Activated CD4-positive, alpha-beta T cell treated with anti-CD3 and anti-CD28 coated beads for 36 hours (primary cell): ENCODE measurements at regions of chr1 and their contacts with region 1.

Region 1: GRCh38 chr1:24111996-24112779 is at the start of gene MYOM3:
- DNase-seq: peak; percentile 82
- ATAC-seq: peak; percentile 97
- H3K4me3 Mint-ChIP-seq: no peak within 1 kb of the TSS
- H3K27ac Mint-ChIP-seq: no peak within 1 kb of the TSS
- H3K4me1 Mint-ChIP-seq: peaks cover 9% of the 10 kb centered on the region
- H3K27me3 Mint-ChIP-seq: peaks cover 13% of the 10 kb centered on the region
- total RNA-seq, gene MYOM3: not detected

Region 2: GRCh38 chr1:24047101-24047459 is 65.1 kb before region 1 on chr1:
- CTCF ChIA-PET with region 1: no interaction called
- POLR2A ChIA-PET with region 1: interaction called, 11 read pairs
- intact Hi-C with region 1: no loop called
- DNase-seq: no peak
- ATAC-seq: no peak
- H3K4me3 Mint-ChIP-seq: no peak overlapping the region
- H3K27ac Mint-ChIP-seq: no peak overlapping the region
- H3K4me1 Mint-ChIP-seq: peaks cover 6% of the 10 kb centered on the region
- H3K27me3 Mint-ChIP-seq: peaks cover 2% of the 10 kb centered on the region

Region 3: DNA sequence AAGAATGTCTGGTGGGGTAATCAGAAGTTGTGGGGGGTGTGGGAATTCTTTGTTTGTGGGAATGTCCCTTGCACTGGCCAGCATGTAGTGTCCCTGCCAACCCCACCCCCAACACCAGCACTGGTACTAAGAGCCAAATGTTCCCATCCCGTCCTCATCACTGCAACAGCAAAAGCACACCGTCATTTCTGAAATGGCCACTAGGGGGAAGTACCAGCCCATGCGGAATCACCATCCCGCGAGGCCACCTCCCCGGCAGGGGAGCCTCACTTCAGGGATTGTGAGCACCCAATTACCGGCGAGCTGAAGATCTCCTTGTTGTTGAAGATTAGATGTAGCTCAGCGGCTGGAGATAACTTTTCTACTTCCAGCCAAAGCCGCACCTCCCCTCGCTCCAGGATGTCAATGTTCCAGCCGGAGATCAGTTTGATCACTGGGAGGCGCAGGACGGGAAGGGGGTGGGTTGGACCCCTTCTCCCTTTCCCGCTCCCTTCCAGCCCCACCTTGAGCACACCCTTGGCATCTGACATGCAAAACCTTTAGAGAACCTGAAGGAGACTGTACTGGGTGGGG is 41.3 kb before region 1 on chr1:
- CTCF ChIA-PET with region 1: interaction called, 9 read pairs
- POLR2A ChIA-PET with region 1: interaction called, 4 read pairs
- intact Hi-C with region 1: loop called (anchors 1 kb)
- DNase-seq: peak; percentile 87
- ATAC-seq: peak; percentile 97
- H3K4me3 Mint-ChIP-seq: no peak overlapping the region
- H3K27ac Mint-ChIP-seq: no peak overlapping the region
- H3K4me1 Mint-ChIP-seq: peaks cover 4% of the 10 kb centered on the region
- H3K27me3 Mint-ChIP-seq: peaks cover 6% of the 10 kb centered on the region

Region 4: GRCh38 chr1:24181619-24182018 is 69.4 kb after region 1 on chr1:
- CTCF ChIA-PET with region 1: no interaction called
- POLR2A ChIA-PET with region 1: no interaction called
- intact Hi-C with region 1: no loop called
- DNase-seq: no peak
- ATAC-seq: no peak
- H3K4me3 Mint-ChIP-seq: no peak overlapping the region
- H3K27ac Mint-ChIP-seq: no peak overlapping the region
- H3K4me1 Mint-ChIP-seq: peaks cover 6% of the 10 kb centered on the region
- H3K27me3 Mint-ChIP-seq: no peaks in the 10 kb centered on the region

Region 5: DNA sequence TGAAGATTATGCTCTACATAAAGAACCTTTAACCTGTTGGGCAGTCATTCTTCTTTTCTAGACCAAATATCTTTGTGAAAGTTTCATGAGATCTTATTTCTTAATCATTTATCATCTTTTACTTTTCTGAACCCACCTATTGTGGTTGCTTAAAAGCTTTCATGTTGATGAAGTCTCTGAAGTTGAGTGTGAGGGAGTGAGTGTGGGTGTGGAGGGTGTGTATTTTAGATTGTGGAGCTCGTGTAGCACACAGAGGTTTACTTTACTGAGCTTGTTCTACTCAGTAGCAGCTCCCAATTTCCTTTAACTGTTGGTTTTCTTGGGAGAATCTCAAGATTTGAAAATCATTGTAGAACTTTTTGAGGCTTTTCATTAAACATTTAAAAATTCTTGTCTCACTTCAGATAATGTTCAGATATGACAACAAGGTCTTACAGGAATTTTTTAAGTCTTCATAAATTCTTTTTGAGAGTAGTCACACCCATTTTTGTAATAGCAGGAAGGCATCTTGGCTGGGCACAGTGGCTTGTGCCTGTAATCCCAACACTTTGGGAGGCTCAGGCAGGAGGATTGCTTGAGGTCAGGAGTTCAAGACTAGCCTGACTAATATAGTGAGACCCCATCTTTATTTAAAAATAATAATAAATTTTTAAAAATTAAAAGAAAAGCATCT is 547.9 kb after region 1 on chr1:
- CTCF ChIA-PET with region 1: no interaction called
- POLR2A ChIA-PET with region 1: no interaction called
- intact Hi-C with region 1: no loop called
- DNase-seq: no peak
- ATAC-seq: no peak
- H3K4me3 Mint-ChIP-seq: no peak overlapping the region
- H3K27ac Mint-ChIP-seq: peak overlapping the region; percentile 72
- H3K4me1 Mint-ChIP-seq: peaks cover 31% of the 10 kb centered on the region
- H3K27me3 Mint-ChIP-seq: no peaks in the 10 kb centered on the region